ENCODE measurements at regions of chr22 and their contacts with region 1.

Region 1: DNA sequence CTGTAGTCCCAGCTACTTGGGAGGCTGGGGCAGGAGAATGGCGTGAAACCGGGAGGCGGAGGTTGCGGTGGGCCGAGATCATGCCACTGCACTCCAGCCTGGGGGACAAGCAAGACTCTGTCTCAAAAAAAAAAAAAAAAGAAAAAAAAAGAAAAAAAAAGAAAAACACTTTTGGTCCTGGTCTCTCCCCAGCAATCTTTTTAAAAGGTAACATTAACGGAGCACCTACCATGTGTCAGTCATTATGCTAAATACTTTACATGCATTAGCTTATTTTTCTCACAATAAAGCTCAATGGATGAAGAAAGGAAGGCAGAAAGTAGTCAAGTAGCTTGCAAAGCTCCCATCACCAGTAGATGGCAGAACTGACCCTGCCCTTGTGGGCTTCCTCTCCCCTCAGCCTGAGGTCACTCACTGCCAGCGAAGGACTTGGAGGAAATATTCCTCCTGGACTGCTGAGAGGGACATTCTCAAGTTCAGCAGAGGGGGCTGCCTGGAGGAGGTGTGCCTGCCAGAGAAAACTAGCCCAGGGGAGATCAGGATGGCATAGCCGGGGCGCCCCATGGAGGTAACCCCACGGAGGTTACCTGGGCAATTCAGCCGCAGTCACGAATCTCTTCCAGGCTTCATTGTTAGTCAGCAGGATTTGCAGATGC is 15.5 kb downstream of the APOL3 start:
- DNase-seq: peak; percentile 69
- ATAC-seq: peak; percentile 86

Region 2: DNA sequence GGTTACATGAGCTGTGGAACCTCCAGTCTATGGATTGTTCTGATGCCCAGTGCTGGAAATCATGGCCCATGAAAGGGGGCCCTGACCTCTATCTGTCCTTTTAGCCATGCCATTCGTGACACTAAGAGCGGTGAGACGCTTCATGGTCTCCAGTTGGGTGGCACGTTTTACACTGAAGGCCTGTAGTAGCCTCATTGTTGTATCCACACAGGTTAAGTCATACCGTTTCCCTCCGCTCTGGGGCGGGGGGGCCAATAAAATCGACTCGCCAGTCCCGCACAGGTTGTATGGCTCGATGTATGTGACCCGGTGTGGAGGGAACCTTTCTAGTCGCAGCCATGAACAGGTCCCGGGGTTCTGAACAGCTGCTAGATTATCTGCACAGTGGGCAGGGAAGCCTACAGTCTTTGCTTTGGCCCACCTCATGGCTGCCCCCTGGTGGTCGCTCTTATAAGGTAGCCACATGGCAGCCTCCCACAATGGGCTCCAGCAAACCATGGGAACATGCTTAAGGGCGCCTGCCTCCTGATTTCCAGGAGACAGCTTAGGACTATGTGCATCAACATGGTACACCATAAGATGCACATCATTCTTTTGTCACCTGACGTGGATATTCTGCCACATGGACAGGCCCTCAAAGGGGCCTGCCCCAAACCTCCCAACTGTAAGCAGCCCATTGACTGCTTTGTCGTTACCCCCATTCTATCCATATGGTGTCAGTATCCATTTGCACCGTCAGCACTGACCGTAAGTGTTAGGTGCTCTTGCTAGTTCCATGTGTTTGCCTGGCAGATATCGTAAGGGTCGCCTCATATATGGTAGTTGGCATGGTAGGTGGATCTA is 35.2 kb after region 1 on chr22:
- intact Hi-C with region 1: loop called (anchors 5 kb)
- DNase-seq: peak; percentile 94
- ATAC-seq: peak; percentile 93

Region 3: GRCh38 chr22:36252754-36253517 is 107.9 kb after region 1 on chr22 and contains the start of gene APOL1:
- intact Hi-C with region 1: no loop called
- DNase-seq: no peak
- ATAC-seq: peak; percentile 51
- total RNA-seq, gene APOL1: 16.8 TPM

Region 4: GRCh38 chr22:36454916-36455570 is 310.0 kb after region 1 on chr22:
- intact Hi-C with region 1: no loop called
- DNase-seq: peak; percentile 97
- ATAC-seq: peak; percentile 92